ENCODE measurements at regions of chr10 and their contacts with region 1.

Region 1: GRCh38 chr10:69123747-69124562 is at the start of gene VPS26A:
- DNase-seq: peak; percentile 97 to 100 (median 99)
- ATAC-seq: peak; percentile 99
- H3K4me3 ChIP-seq: peak within 1 kb of the TSS; percentile 85
- H3K4me3 Mint-ChIP-seq: peak within 1 kb of the TSS; percentile 93 to 99 (median 96)
- H3K27ac ChIP-seq: peak within 1 kb of the TSS; percentile 94
- H3K27ac Mint-ChIP-seq: peak within 1 kb of the TSS; percentile 92 to 98 (median 97)
- H3K4me1 ChIP-seq: peaks cover 8 to 16% of the 10 kb centered on the region in 2 donors
- H3K4me1 Mint-ChIP-seq: peaks cover 5 to 37% (median 35%) of the 10 kb centered on the region in 7 donors
- H3K27me3 ChIP-seq: no peaks in the 10 kb centered on the region
- H3K27me3 Mint-ChIP-seq: no peaks in the 10 kb centered on the region
- total RNA-seq, gene VPS26A: 25.5 to 35.0 (median 29.5) TPM

Region 2: GRCh38 chr10:67884313-67884841 is 1239.6 kb before region 1 on chr10 and contains the start of gene SIRT1:
- CTCF ChIA-PET with region 1: no interaction called
- POLR2A ChIA-PET with region 1: no interaction called
- intact Hi-C with region 1: loop called (anchors 10 kb)
- DNase-seq: peak; percentile 87 to 95 (median 90)
- ATAC-seq: peak; percentile 89
- H3K4me3 ChIP-seq: peak within 1 kb of the TSS; percentile 75
- H3K4me3 Mint-ChIP-seq: peak within 1 kb of the TSS; percentile 86 to 98 (median 95)
- H3K27ac ChIP-seq: peak within 1 kb of the TSS; percentile 83
- H3K27ac Mint-ChIP-seq: peak within 1 kb of the TSS; percentile 90 to 98 (median 95)
- H3K4me1 ChIP-seq: peaks cover 12 to 16% of the 10 kb centered on the region in 2 donors
- H3K4me1 Mint-ChIP-seq: peaks cover 27 to 43% (median 35%) of the 10 kb centered on the region in 7 donors
- H3K27me3 ChIP-seq: no peaks in the 10 kb centered on the region
- H3K27me3 Mint-ChIP-seq: peaks cover 0 to 5% (median 0%) of the 10 kb centered on the region in 5 donors
- total RNA-seq, gene SIRT1: 25.9 to 66.8 (median 59.5) TPM

Region 3: GRCh38 chr10:68720793-68721672 is 402.9 kb before region 1 on chr10 and contains the start of gene CCAR1:
- CTCF ChIA-PET with region 1: no interaction called
- POLR2A ChIA-PET with region 1: no interaction called
- intact Hi-C with region 1: loop called in 1 of 2 experiments (anchors 1 kb)
- DNase-seq: peak; percentile 86 to 97 (median 96)
- ATAC-seq: peak; percentile 99
- H3K4me3 ChIP-seq: peak within 1 kb of the TSS; percentile 64
- H3K4me3 Mint-ChIP-seq: peak within 1 kb of the TSS; percentile 87 to 100 (median 96)
- H3K27ac ChIP-seq: peak within 1 kb of the TSS; percentile 96
- H3K27ac Mint-ChIP-seq: peak within 1 kb of the TSS; percentile 95 to 99 (median 98)
- H3K4me1 ChIP-seq: peaks cover 6 to 7% of the 10 kb centered on the region in 2 donors
- H3K4me1 Mint-ChIP-seq: peaks cover 10 to 23% (median 16%) of the 10 kb centered on the region in 7 donors
- H3K27me3 ChIP-seq: no peaks in the 10 kb centered on the region
- H3K27me3 Mint-ChIP-seq: peaks cover 0 to 2% (median 0%) of the 10 kb centered on the region in 5 donors
- total RNA-seq, gene CCAR1: 64.4 to 89.5 (median 88.2) TPM

Region 4: DNA sequence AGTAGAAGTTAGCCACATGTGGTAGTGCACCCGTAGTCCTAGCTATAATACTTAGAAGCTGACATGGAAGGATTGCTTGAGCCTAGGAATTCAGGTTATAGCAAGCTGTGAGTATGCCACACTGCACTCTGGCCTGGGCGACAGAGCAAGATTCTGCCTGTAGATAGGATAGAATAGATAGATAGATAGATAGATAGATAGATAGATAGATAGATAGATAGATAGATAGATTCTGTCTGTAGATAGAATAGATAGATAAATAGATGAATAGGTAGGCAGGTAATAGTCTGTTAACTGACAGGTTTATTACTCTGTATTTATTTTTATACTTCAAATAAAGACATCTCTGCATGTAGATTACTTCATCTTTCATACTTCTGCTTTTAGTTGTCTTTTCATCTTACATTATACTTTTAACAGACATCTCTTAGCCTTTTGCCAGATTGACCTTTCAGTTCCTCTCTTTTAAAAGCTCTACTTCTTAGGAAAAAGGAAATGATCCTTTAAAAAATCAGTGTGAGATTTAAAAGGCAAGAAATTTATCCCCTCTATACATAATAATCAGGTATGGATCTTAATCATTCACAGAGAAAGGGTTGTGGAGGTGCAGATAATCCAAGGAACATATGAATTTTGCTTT is 371.1 kb before region 1 on chr10:
- CTCF ChIA-PET with region 1: no interaction called
- POLR2A ChIA-PET with region 1: no interaction called
- intact Hi-C with region 1: no loop called
- DNase-seq: no peak
- ATAC-seq: no peak
- H3K4me3 ChIP-seq: no peak overlapping the region
- H3K4me3 Mint-ChIP-seq: no peak overlapping the region
- H3K27ac ChIP-seq: no peak overlapping the region
- H3K27ac Mint-ChIP-seq: peak overlapping the region in 3 of 9 donors; percentile 0 to 43 (median 14)
- H3K4me1 ChIP-seq: no peaks in the 10 kb centered on the region
- H3K4me1 Mint-ChIP-seq: no peaks in the 10 kb centered on the region
- H3K27me3 ChIP-seq: no peaks in the 10 kb centered on the region
- H3K27me3 Mint-ChIP-seq: no peaks in the 10 kb centered on the region

Region 5: GRCh38 chr10:69004821-69005220 is 119.1 kb before region 1 on chr10:
- CTCF ChIA-PET with region 1: interaction called, 9 read pairs
- POLR2A ChIA-PET with region 1: interaction called, 3 read pairs
- intact Hi-C with region 1: loop called (anchors 1 kb)
- DNase-seq: peak in 7 of 9 donors; percentile 42 to 72 (median 60)
- ATAC-seq: peak; percentile 74
- H3K4me3 ChIP-seq: no peak overlapping the region
- H3K4me3 Mint-ChIP-seq: no peak overlapping the region
- H3K27ac ChIP-seq: no peak overlapping the region
- H3K27ac Mint-ChIP-seq: peak overlapping the region in 4 of 9 donors; percentile 23 to 43 (median 28)
- H3K4me1 ChIP-seq: peaks cover 0 to 3% of the 10 kb centered on the region in 2 donors
- H3K4me1 Mint-ChIP-seq: peaks cover 0 to 11% (median 5%) of the 10 kb centered on the region in 7 donors
- H3K27me3 ChIP-seq: no peaks in the 10 kb centered on the region
- H3K27me3 Mint-ChIP-seq: no peaks in the 10 kb centered on the region

Region 6: GRCh38 chr10:69045441-69046300 is 78.3 kb before region 1 on chr10:
- CTCF ChIA-PET with region 1: no interaction called
- POLR2A ChIA-PET with region 1: no interaction called
- intact Hi-C with region 1: no loop called
- DNase-seq: peak in 7 of 9 donors; percentile 22 to 65 (median 44)
- ATAC-seq: peak; percentile 83
- H3K4me3 ChIP-seq: no peak overlapping the region
- H3K4me3 Mint-ChIP-seq: peak overlapping the region in 9 of 10 donors; percentile 50 to 80 (median 67)
- H3K27ac ChIP-seq: peak overlapping the region; percentile 61
- H3K27ac Mint-ChIP-seq: peak overlapping the region; percentile 86 to 99 (median 91)
- H3K4me1 ChIP-seq: peaks cover 23 to 38% of the 10 kb centered on the region in 2 donors
- H3K4me1 Mint-ChIP-seq: peaks cover 11 to 44% (median 30%) of the 10 kb centered on the region in 7 donors
- H3K27me3 ChIP-seq: no peaks in the 10 kb centered on the region
- H3K27me3 Mint-ChIP-seq: no peaks in the 10 kb centered on the region

Region 7: GRCh38 chr10:69139961-69140360 is 16.0 kb after region 1 on chr10:
- CTCF ChIA-PET with region 1: no interaction called
- POLR2A ChIA-PET with region 1: interaction called, 4 read pairs
- intact Hi-C with region 1: loop called in 1 of 2 experiments (anchors 2 kb)
- DNase-seq: no peak
- ATAC-seq: no peak
- H3K4me3 ChIP-seq: no peak overlapping the region
- H3K4me3 Mint-ChIP-seq: no peak overlapping the region
- H3K27ac ChIP-seq: no peak overlapping the region
- H3K27ac Mint-ChIP-seq: no peak overlapping the region
- H3K4me1 ChIP-seq: no peaks in the 10 kb centered on the region
- H3K4me1 Mint-ChIP-seq: peaks cover 20 to 67% (median 39%) of the 10 kb centered on the region in 7 donors
- H3K27me3 ChIP-seq: no peaks in the 10 kb centered on the region
- H3K27me3 Mint-ChIP-seq: no peaks in the 10 kb centered on the region

Region 8: GRCh38 chr10:69318106-69318866 is 194.3 kb after region 1 on chr10:
- CTCF ChIA-PET with region 1: no interaction called
- POLR2A ChIA-PET with region 1: no interaction called
- intact Hi-C with region 1: loop called (anchors 1 kb)
- DNase-seq: peak; percentile 88 to 96 (median 91)
- ATAC-seq: peak; percentile 97
- H3K4me3 ChIP-seq: peak overlapping the region; percentile 85
- H3K4me3 Mint-ChIP-seq: peak overlapping the region; percentile 86 to 99 (median 96)
- H3K27ac ChIP-seq: peak overlapping the region; percentile 90
- H3K27ac Mint-ChIP-seq: peak overlapping the region; percentile 51 to 97 (median 86)
- H3K4me1 ChIP-seq: peaks cover 22 to 26% of the 10 kb centered on the region in 2 donors
- H3K4me1 Mint-ChIP-seq: peaks cover 7 to 49% (median 36%) of the 10 kb centered on the region in 7 donors
- H3K27me3 ChIP-seq: no peaks in the 10 kb centered on the region
- H3K27me3 Mint-ChIP-seq: no peaks in the 10 kb centered on the region

Region 9: GRCh38 chr10:69328380-69328735 is 204.4 kb after region 1 on chr10:
- CTCF ChIA-PET with region 1: no interaction called
- POLR2A ChIA-PET with region 1: no interaction called
- intact Hi-C with region 1: no loop called
- DNase-seq: no peak
- ATAC-seq: peak; percentile 40
- H3K4me3 ChIP-seq: peak overlapping the region; percentile 32
- H3K4me3 Mint-ChIP-seq: peak overlapping the region; percentile 76 to 90 (median 82)
- H3K27ac ChIP-seq: peak overlapping the region; percentile 65
- H3K27ac Mint-ChIP-seq: peak overlapping the region; percentile 68 to 96 (median 89)
- H3K4me1 ChIP-seq: peaks cover 16 to 21% of the 10 kb centered on the region in 2 donors
- H3K4me1 Mint-ChIP-seq: peaks cover 43 to 93% (median 77%) of the 10 kb centered on the region in 7 donors
- H3K27me3 ChIP-seq: no peaks in the 10 kb centered on the region
- H3K27me3 Mint-ChIP-seq: no peaks in the 10 kb centered on the region